Right ventricle myocardium inferior (tissue), 1 donor: ENCODE measurements at regions of chr5 and their contacts with region 1.

Region 1: DNA sequence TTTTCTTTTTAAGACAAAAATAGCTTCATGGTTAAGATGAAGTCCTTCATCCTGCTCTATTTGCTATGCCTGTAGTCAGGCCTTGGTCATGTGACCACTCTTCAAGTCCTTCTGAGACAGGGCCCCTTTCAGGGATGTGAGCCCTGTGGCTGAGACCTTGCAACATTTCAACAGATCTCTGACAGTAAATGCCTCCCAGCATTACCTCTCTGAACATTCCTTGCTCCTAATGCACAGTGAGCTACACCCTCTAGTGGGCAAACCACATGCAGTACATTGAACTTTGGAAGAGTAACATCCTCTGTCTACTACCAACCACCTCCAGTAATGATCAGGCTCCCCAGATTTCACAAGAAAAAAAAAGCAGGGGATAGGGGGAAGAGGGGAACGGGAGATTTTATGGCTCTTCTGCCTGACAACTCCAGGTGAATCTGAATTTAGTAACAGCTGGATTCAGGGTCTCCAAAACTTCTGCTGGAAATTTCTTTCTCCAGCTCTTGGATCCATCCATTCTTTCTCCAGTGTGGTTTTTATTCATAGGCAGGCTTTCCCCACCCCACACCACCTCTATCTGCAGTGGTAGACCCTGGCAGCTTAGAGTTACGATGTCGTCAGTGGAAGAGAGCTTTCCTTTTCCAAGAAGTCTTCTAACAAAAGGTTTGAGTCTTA is 8.9 kb upstream of the FBXO38 start:
- DNase-seq: no peak
- ATAC-seq: peak; percentile 48

Region 2: DNA sequence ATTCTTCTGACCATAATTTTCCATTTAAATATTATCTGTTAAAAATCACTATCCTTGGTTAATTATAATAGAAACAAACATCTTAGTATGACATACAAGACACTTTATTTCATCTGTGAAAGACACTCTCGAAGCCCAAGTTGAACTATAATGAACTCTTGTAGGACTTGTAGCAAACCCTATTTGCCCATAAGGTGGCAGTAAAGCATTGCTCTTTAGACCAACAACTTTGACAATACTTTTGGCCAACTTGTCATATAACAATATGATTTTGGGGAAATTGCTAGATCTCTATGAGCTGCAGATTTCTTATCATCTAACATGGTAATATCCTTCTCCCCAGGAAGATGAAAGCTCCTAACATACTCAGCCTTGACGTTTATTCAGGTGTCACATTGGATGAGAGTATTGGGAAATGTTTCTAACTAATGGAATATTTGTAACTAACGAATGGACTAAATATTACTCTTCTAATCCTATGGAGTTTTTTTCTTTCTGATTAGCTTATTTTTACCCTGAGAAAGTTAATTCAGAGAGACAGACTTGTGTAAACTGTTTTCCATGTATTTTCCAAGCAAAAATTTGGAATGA is 195.5 kb before region 1 on chr5:
- intact Hi-C with region 1: loop called (anchors 10 kb)
- DNase-seq: no peak
- ATAC-seq: peak; percentile 56

Region 3: DNA sequence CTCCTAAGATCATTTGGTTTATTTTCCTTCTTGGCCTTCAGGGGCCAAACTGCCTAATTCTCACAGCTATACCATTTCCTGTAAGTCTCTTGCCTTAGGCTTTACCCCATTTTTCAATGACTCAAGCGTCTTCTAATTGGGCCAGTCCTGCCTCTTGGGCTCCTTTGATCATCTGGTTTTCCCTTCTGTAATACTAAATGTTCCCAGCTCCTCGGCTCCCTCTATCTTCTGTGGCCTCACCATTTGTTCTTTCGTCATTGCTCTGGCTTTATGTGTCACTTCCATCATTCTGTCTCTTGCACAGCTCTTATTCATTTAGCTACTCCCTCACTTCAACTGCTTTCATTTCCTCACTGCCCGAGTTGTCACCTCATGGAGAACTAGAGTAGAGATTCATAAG is 77.1 kb before region 1 on chr5:
- intact Hi-C with region 1: no loop called
- DNase-seq: no peak
- ATAC-seq: no peak